HEK293 (cell line): ENCODE measurements at regions of chr15 and their contacts with region 1.

Region 1: GRCh38 chr15:60444289-60444912 is 34.5 kb downstream of the ICE2 start:
- H3K4me3 ChIP-seq: no peak overlapping the region
- H3K27ac ChIP-seq: no peak overlapping the region
- H3K4me1 ChIP-seq: no peaks in the 10 kb centered on the region
- CTCF ChIP-seq: no peak

Region 2: GRCh38 chr15:60428935-60429334 is 15.5 kb before region 1 on chr15:
- CTCF ChIA-PET with region 1: interaction called, 11 read pairs
- POLR2A ChIA-PET with region 1: no interaction called
- H3K4me3 ChIP-seq: no peak overlapping the region
- H3K27ac ChIP-seq: no peak overlapping the region
- H3K4me1 ChIP-seq: no peaks in the 10 kb centered on the region
- CTCF ChIP-seq: no peak

Region 3: DNA sequence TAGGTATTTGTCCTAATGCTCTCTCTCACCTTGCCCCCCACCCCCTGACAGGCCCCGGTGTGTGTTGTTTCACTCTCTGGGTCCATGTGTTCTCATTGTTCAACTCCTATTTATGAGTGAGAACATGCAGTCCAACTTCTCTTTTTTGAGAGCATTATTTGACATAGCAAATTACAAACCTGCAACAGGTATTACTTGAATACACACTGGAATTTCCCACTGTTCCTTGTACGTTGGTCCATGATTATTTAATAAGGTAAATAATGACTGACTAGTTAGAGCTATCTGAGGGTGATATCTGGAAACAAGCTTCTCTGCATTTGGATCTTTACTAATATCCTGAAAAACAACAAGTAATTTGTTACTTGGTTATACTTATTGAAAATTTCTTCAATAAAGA is 10.4 kb after region 1 on chr15:
- CTCF ChIA-PET with region 1: no interaction called
- POLR2A ChIA-PET with region 1: no interaction called
- H3K4me3 ChIP-seq: no peak overlapping the region
- H3K27ac ChIP-seq: no peak overlapping the region
- H3K4me1 ChIP-seq: no peaks in the 10 kb centered on the region
- CTCF ChIP-seq: no peak